A549 (cell line): ENCODE measurements at regions of chr15 and their contacts with region 1.

Region 1: GRCh38 chr15:28123408-28124023 is 24.4 kb upstream of the OCA2 start:
- DNase-seq: peak; percentile 81 to 83
- ATAC-seq: peak; percentile 95 to 96
- H3K4me3 ChIP-seq: no peak overlapping the region
- H3K27ac ChIP-seq: no peak overlapping the region
- H3K4me1 ChIP-seq: no peaks in the 10 kb centered on the region
- CTCF ChIP-seq: peak; percentile 69
- EP300 ChIP-seq: no peak
- POLR2A ChIP-seq: no peak
- RAD21 ChIP-seq: peak; percentile 62 to 68

Region 2: DNA sequence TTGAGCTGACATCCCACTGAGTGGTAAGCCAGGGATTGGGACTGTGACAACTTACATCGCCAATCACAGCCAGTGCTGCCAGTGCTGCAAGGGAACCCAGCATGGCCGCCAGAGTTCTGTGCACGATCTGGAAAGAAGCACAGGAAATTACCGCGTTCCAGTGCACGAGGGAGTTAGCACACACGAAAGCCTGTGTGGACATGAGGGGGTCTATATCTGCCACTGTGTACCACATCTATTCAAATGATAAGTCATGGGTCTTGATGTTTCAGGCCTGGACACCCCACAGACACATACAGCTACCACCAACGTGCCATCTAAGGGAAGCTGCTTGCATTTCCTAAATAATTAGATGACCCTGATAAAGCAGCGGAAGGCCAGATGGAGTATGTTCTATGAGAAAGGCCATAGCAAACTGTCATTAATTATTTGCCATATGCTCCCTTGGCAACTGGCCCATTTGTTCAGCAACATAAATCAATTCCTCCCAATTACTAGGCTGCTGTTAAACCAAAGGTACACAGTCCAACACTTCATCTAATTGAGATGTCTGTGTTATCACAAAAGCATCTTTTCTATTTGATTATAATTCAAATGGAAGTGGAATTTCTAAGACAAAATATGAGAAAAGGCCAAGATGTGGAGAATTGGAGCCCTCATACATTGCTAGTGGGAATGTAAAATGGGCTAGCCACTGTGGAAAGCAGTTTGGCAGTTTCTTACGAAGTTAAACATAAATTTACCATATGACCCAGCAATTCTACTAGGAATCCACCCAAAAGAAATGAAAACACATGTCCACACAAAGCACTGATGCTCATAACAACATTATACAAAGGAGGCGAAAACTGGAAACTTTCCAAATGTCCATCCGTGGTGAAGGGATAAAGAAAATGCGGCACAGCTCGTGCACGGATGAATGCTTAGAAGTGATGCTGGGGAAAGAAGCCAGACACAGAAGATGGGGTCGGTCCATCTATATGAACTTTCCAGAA is 132.7 kb before region 1 on chr15:
- CTCF ChIA-PET with region 1: no interaction called
- POLR2A ChIA-PET with region 1: no interaction called
- DNase-seq: no peak
- ATAC-seq: no peak
- H3K4me3 ChIP-seq: no peak overlapping the region
- H3K27ac ChIP-seq: no peak overlapping the region
- H3K4me1 ChIP-seq: no peaks in the 10 kb centered on the region
- CTCF ChIP-seq: no peak
- EP300 ChIP-seq: no peak
- POLR2A ChIP-seq: no peak
- RAD21 ChIP-seq: no peak

Region 3: GRCh38 chr15:28003302-28004037 is 120.0 kb before region 1 on chr15:
- CTCF ChIA-PET with region 1: no interaction called
- POLR2A ChIA-PET with region 1: no interaction called
- DNase-seq: no peak
- ATAC-seq: no peak
- H3K4me3 ChIP-seq: no peak overlapping the region
- H3K27ac ChIP-seq: no peak overlapping the region
- H3K4me1 ChIP-seq: peaks cover 5% of the 10 kb centered on the region; the same call in 1 of the 3 replicates
- CTCF ChIP-seq: no peak
- EP300 ChIP-seq: no peak
- POLR2A ChIP-seq: no peak
- RAD21 ChIP-seq: no peak

Region 4: GRCh38 chr15:28085489-28086174 is 37.9 kb before region 1 on chr15:
- CTCF ChIA-PET with region 1: interaction called, 11 read pairs
- POLR2A ChIA-PET with region 1: no interaction called
- DNase-seq: no peak
- ATAC-seq: peak in 1 of 2 experiments; percentile 68; a peak in 4 of 6 replicates
- H3K4me3 ChIP-seq: no peak overlapping the region
- H3K27ac ChIP-seq: no peak overlapping the region
- H3K4me1 ChIP-seq: no peaks in the 10 kb centered on the region
- CTCF ChIP-seq: no peak
- EP300 ChIP-seq: no peak
- POLR2A ChIP-seq: no peak
- RAD21 ChIP-seq: no peak

Region 5: DNA sequence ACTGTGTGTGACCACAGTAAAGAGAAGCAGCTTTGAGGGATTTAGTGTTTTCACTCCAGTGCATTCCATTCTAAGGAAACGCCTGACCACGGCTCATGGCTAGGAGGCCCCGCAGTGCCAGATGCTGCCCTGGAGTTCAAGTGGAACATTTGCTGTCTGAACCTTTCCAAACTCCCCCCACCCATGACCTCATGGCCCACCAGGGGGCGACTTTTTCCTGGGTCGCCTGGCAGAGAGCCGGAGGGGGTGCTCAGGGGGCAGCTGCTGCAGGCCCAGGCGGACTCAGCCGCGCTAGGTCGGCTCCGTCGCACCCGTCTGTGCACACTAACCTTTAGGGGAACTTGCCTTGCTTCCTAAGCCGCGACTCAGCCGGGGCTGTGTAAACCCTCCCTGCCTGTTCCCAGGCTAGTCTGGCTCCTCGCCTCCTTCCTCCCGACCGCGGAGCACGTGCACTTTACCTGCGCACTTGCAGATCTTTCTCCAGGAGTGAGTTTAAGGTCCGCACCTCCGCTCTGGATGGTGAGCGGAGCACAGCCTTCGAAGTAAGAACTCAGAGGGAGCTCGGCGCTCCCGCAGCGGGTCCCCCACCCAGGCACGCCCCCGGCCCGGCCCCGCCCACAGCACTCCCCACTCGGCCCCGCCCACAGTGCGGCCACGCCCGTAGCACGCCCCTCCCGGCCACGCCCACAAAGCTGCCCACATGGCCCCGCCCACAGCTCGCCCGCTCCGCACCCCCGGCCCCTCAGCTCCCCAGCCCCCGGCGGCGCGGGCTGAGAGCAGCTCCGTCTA is 24.6 kb before region 1 on chr15 and contains the start of gene OCA2:
- CTCF ChIA-PET with region 1: interaction called, 24 read pairs
- POLR2A ChIA-PET with region 1: no interaction called
- DNase-seq: peak; percentile 40 to 69
- ATAC-seq: peak; percentile 42 to 63
- H3K4me3 ChIP-seq: peak within 1 kb of the TSS; percentile 42
- H3K27ac ChIP-seq: peak within 1 kb of the TSS; percentile 44 to 46; a peak in 4 of 6 replicates
- H3K4me1 ChIP-seq: peaks cover 7% of the 10 kb centered on the region; the same call in 2 of the 3 replicates
- CTCF ChIP-seq: peak; percentile 38
- EP300 ChIP-seq: no peak
- POLR2A ChIP-seq: no peak
- RAD21 ChIP-seq: no peak
- polyA plus RNA-seq, gene OCA2: 0.25 and 0.34 TPM in 2 replicates

Region 6: DNA sequence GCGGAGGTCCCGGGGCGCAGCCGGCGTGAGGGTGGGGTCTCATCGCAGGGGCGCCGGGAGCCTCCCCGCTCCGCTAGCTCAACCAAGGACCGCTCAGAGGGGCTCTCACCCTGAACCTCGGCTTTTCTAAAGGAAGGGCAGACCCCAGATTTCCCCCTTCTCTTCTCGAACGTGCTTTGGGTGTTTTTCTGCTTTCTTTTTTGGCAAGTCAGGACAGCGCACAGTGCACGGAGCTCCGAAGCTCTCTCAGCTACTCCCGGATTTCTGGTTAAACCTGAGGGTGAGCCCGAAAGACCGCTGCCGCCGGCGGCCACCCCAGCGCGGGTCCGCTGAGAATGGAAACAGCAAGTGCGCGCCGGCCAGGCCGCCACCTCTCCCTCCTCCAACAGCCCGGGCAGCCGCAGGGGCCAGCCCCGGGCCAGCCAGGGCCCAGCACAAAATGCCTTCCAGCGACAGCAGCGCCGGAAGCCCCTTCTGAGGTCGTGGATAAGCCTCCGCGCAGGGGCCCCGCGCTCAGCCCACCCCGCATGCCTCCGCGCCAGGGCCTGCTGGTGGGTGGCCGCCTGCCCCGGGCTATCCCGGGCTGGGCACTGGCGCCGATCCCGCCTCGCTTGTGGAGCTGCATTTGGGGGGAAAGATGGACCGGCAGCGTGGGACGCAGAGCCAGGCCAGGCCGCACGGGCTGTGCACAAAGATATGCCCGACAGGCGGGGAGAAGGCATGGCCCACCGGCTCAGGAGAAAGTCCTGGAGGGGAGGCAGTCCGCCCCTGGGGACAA is 16.2 kb before region 1 on chr15:
- CTCF ChIA-PET with region 1: interaction called, 48 read pairs
- POLR2A ChIA-PET with region 1: no interaction called
- DNase-seq: no peak
- ATAC-seq: peak in 1 of 2 experiments; percentile 8; a peak in 1 of 6 replicates
- H3K4me3 ChIP-seq: peak overlapping the region; percentile 42; the same call in 2 of the 3 replicates
- H3K27ac ChIP-seq: peak overlapping the region in 1 of 2 experiments; percentile 70; a peak in 1 of 6 replicates
- H3K4me1 ChIP-seq: no peaks in the 10 kb centered on the region; the same call in 2 of the 3 replicates
- CTCF ChIP-seq: no peak
- EP300 ChIP-seq: no peak
- POLR2A ChIP-seq: no peak
- RAD21 ChIP-seq: no peak

Region 7: DNA sequence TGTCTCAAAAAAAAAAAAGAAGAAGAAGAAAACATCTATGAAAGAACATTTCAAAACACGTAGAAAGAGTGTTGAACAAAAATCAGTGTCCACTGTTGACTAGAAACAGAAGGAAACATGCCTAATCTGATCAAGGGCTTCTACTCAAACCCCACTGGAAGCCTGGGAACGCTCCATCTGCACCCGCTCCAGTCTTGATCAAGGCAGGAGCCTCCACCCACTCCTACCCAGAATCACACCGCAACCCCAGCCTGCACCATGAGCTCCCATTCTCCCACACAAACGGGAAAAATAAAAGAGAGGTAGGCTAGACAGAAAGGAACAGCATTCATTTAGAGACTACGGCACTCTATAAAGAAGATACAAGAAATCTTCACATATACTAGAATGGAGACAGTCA is 16.5 kb after region 1 on chr15:
- CTCF ChIA-PET with region 1: interaction called, 19 read pairs
- POLR2A ChIA-PET with region 1: no interaction called
- DNase-seq: no peak
- ATAC-seq: no peak
- H3K4me3 ChIP-seq: no peak overlapping the region
- H3K27ac ChIP-seq: no peak overlapping the region
- H3K4me1 ChIP-seq: no peaks in the 10 kb centered on the region
- CTCF ChIP-seq: no peak
- EP300 ChIP-seq: no peak
- POLR2A ChIP-seq: no peak
- RAD21 ChIP-seq: no peak

Region 8: GRCh38 chr15:28147801-28148200 is 24.3 kb after region 1 on chr15:
- CTCF ChIA-PET with region 1: interaction called, 17 read pairs
- POLR2A ChIA-PET with region 1: interaction called, 4 read pairs
- DNase-seq: no peak
- ATAC-seq: no peak
- H3K4me3 ChIP-seq: no peak overlapping the region
- H3K27ac ChIP-seq: no peak overlapping the region
- H3K4me1 ChIP-seq: peaks cover 11% of the 10 kb centered on the region
- CTCF ChIP-seq: no peak
- EP300 ChIP-seq: no peak
- POLR2A ChIP-seq: no peak
- RAD21 ChIP-seq: no peak

Region 9: GRCh38 chr15:28153492-28154119 is 30.1 kb after region 1 on chr15:
- CTCF ChIA-PET with region 1: interaction called, 15 read pairs
- POLR2A ChIA-PET with region 1: interaction called, 4 read pairs
- DNase-seq: no peak
- ATAC-seq: no peak
- H3K4me3 ChIP-seq: no peak overlapping the region
- H3K27ac ChIP-seq: no peak overlapping the region
- H3K4me1 ChIP-seq: peaks cover 11% of the 10 kb centered on the region
- CTCF ChIP-seq: no peak
- EP300 ChIP-seq: no peak
- POLR2A ChIP-seq: no peak
- RAD21 ChIP-seq: no peak